RWPE1 (cell line): ENCODE measurements at regions of chr9 and their contacts with region 1.

Region 1: GRCh38 chr9:77456829-77457437 is 191.2 kb downstream of the GNA14 start:
- DNase-seq: peak; percentile 91
- H3K27ac ChIP-seq: no peak overlapping the region
- CTCF ChIP-seq: peak; percentile 91

Region 2: DNA sequence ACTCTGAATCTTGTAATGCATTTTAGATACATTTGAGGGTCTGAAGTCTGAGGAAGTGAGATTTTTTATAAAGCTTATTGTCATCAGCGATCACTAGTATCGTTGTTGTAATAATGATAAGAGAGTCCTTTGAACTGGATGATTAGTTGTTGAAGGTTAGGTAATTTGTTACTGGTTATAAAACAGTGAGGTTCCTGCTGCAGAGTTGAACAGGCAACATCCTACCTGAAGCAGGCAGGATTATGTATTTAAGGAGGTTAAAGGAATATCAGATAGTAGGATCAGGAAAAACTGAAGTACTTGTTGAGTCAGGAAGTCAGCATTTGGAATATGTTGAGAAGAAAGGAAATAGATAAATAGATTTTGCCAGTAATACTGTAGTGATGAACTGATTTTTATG is 172.9 kb before region 1 on chr9:
- CTCF ChIA-PET with region 1: no interaction called
- POLR2A ChIA-PET with region 1: no interaction called
- DNase-seq: no peak
- H3K27ac ChIP-seq: no peak overlapping the region
- CTCF ChIP-seq: no peak

Region 3: DNA sequence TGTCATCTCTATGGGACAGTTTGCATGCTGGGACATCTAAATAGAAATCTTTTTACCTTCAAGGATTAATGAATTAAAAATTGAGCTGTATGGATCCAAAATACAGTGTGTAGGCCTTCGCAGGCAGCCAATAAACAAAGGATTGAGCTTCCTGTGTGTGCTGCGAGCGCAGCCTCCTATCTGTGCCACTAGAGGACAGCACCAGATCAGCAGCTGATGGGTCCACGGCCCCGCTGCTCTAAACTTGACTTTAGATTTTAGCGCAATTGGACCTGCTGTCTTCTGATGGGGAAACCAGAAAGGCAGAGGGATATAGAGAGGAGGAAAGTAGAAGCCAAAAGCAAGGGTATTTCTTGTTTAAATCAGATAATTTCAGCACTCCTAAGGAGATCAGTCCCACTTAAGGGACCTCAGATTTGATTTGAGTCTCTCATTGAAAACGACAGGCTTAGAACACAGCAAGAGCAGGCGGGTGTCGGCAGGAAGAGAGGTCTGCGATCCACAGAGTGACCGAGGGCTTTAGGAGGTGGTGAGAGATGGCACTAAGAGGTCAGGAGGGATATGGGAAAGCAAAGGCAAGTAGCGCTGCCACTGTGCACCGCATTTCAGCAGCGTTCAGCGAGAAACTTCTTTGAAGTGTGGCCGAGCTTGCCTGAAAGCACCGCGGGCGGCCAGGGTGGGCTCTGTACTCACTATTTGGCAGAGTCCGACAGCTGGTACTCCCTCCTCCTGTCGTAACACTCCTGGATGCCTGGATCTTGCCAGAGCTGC is 23.1 kb before region 1 on chr9:
- CTCF ChIA-PET with region 1: interaction called, 38 read pairs
- POLR2A ChIA-PET with region 1: no interaction called
- DNase-seq: peak; percentile 80
- H3K27ac ChIP-seq: no peak overlapping the region
- CTCF ChIP-seq: peak; percentile 98

Region 4: DNA sequence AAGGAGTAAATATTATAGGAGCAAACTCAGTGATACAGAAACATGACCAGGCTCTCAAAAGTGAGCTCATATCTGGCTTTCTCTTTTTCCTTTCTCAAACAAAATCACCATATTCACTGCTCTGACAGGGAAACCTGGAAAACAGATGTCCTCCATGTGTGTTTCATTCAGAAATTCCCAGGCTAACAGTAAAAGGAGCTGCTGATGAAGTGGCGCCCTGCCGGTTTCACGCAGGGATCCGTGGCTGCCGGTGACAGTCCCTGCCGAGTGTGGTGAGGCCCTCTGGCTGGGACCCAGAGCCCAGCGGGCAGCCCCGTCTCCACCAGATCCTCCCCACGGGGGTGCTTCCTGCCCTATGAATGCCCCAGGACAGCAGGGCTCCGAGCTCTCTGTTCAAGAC is 16.9 kb before region 1 on chr9:
- CTCF ChIA-PET with region 1: interaction called, 38 read pairs
- POLR2A ChIA-PET with region 1: no interaction called
- DNase-seq: no peak
- H3K27ac ChIP-seq: no peak overlapping the region
- CTCF ChIP-seq: no peak

Region 5: DNA sequence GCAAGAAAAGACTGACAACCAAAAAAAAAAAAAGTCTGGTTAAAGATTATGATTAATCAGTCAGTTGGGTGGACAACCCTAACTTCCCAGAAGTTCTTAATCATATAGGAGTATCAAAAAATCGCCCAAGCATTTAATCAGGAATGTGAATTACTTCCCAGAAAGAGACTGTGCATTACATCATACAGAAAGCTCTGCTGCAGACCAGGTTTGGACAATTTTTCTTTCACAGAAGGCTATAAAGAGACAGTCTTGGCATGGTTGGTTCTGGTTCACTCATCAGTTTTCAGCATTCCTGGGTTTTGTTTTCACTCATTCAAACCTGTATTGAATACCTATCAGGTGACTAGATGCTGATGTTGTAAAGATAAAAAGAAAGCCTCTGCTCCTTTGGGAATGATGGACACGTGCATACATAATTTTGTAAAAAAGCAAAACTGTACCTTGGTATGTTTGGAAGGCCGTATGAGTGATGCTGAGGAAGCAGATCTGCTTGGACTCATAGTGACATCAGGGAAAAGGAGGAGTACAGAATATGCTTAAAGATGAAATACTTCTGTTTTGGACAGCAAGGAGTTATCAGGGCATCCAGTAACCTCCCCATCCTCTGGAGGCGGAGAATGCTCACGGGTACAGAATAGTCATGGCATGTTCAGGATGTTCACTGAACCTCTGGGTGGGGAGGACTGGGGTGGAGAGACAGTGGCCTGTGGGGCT is 12.7 kb after region 1 on chr9:
- CTCF ChIA-PET with region 1: interaction called, 23 read pairs
- POLR2A ChIA-PET with region 1: no interaction called
- DNase-seq: no peak
- H3K27ac ChIP-seq: no peak overlapping the region
- CTCF ChIP-seq: no peak

Region 6: DNA sequence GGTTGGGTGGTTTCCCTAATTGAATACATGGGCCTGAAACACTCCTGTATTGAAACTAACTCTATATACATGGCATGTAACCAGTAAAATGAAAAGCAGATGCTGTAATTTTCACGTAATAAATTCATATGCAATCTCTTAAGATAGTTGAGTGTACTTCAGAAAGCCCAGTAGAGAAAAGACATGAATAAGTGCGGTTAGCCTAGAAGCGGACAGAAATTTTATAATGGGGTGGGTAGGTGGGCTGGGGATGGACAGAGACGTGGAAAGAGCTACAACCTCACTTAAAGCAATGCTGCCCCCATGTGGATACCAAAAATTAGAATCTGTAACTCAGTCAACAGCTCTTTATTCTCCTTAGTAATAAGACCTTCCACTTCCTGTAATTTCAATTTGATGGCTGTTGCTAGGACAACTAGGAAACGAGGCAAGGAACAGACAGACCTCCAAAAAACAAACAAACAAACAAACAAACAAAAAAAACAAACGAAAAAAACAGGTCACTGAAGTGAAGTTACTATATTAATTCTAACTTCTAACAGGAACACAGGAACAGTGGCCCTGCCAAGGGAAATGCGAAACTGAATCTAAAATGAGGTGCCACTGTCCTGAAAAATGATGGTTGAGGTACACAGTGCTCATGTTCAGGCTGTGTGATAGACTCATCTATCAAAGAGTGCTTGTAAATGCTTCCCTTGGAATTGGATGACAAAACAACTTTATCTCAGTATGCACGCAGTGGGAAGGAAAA is 294.6 kb after region 1 on chr9:
- CTCF ChIA-PET with region 1: interaction called, 11 read pairs
- POLR2A ChIA-PET with region 1: no interaction called
- DNase-seq: peak; percentile 25
- H3K27ac ChIP-seq: no peak overlapping the region
- CTCF ChIP-seq: peak; percentile 47; the same call in 1 of the 2 replicates

Region 7: GRCh38 chr9:78035383-78035993 is 578.6 kb after region 1 on chr9:
- CTCF ChIA-PET with region 1: interaction called, 11 read pairs
- POLR2A ChIA-PET with region 1: no interaction called
- DNase-seq: peak; percentile 54
- H3K27ac ChIP-seq: no peak overlapping the region
- CTCF ChIP-seq: peak; percentile 86